ENCODE measurements at regions of chr5 and their contacts with region 1.

Region 1: GRCh38 chr5:145936401-145937131 is at the start of gene SH3RF2:
- DNase-seq: peak; percentile 68 to 85
- ATAC-seq: peak; percentile 67
- H3K4me3 ChIP-seq: peak within 1 kb of the TSS; percentile 19 to 32
- H3K27ac ChIP-seq: peak within 1 kb of the TSS in 1 of 2 donors; percentile 58
- H3K4me1 ChIP-seq: peaks cover 0 to 1% of the 10 kb centered on the region in 2 donors
- H3K27me3 ChIP-seq: no peaks in the 10 kb centered on the region
- total RNA-seq, gene SH3RF2: 3.1 to 4.5 TPM

Region 2: DNA sequence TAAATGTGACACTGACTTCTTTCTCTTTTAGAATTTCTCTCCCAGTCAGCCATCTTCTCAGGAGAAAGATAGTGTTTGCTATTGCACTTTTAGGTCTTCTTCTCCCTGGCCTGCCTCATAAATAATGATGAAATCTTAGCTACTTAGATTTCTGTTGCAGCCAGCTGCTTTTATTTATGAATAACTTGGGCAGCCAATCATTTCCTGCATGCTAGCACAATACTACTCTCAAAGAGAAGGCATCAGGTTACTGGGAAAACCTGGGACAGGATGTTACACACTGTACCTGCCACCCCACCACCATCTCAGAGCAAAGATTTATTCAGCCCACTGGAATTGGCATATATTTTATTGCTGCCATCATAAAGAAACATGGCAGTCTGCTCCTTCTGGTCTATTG is 368.0 kb before region 1 on chr5:
- intact Hi-C with region 1: no loop called
- DNase-seq: no peak
- ATAC-seq: no peak
- H3K4me3 ChIP-seq: no peak overlapping the region
- H3K27ac ChIP-seq: no peak overlapping the region
- H3K4me1 ChIP-seq: no peaks in the 10 kb centered on the region
- H3K27me3 ChIP-seq: no peaks in the 10 kb centered on the region

Region 3: DNA sequence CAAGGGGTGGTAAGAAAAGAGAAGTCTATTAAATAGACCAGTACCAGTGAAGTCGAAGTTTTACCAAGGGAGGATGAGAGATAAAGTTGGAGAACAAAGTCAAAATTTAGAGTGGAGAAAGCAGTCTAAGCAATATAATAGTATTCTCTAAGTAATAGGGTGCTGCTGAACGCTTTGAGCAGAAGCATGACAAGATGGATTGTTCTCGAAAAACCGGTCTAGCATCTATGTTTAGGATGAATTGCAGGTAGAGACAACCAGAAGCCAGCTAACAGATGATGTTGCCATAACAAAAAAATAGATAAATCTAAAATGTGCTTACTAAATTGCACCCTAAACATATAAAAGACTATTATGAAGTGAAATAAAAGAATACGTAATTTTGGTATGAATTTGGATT is 338.4 kb before region 1 on chr5:
- intact Hi-C with region 1: no loop called
- DNase-seq: no peak
- ATAC-seq: no peak
- H3K4me3 ChIP-seq: no peak overlapping the region
- H3K27ac ChIP-seq: no peak overlapping the region
- H3K4me1 ChIP-seq: no peaks in the 10 kb centered on the region
- H3K27me3 ChIP-seq: no peaks in the 10 kb centered on the region

Region 4: GRCh38 chr5:145975361-145976066 is 38.9 kb after region 1 on chr5:
- intact Hi-C with region 1: loop called in 1 of 2 experiments (anchors 5 kb)
- DNase-seq: peak in 1 of 2 donors; percentile 58
- ATAC-seq: peak; percentile 58
- H3K4me3 ChIP-seq: no peak overlapping the region
- H3K27ac ChIP-seq: peak overlapping the region; percentile 32 to 98
- H3K4me1 ChIP-seq: peaks cover 7% of the 10 kb centered on the region in 2 donors
- H3K27me3 ChIP-seq: no peaks in the 10 kb centered on the region

Region 5: DNA sequence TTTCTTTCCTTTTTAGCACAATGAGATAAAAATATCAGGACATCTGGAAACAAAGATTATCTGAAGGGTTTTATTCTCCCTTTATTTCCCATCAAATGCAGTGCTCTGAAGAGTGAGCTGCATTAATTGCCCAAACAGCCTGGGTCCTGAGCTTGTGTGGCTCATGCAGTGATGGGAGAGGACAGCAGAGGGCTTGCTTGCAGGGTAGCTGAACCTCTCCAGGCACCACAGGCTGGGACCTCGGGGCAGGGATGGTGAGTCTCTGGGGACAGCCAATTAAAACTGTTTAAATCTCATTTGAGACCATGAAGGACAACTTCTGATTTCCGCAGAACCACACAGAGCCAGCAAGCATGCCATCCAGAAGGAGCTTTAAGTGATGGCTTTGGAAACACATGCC is 97.6 kb after region 1 on chr5:
- intact Hi-C with region 1: loop called in 1 of 2 experiments (anchors 10 kb)
- DNase-seq: no peak
- ATAC-seq: no peak
- H3K4me3 ChIP-seq: no peak overlapping the region
- H3K27ac ChIP-seq: no peak overlapping the region
- H3K4me1 ChIP-seq: no peaks in the 10 kb centered on the region
- H3K27me3 ChIP-seq: no peaks in the 10 kb centered on the region

Region 6: GRCh38 chr5:146203011-146203871 is 266.7 kb after region 1 on chr5 and contains the start of gene RBM27:
- intact Hi-C with region 1: no loop called
- DNase-seq: peak; percentile 97 to 98
- ATAC-seq: peak; percentile 100
- H3K4me3 ChIP-seq: peak within 1 kb of the TSS; percentile 81 to 97
- H3K27ac ChIP-seq: peak within 1 kb of the TSS in 1 of 2 donors; percentile 74
- H3K4me1 ChIP-seq: peaks cover 0 to 4% of the 10 kb centered on the region in 2 donors
- H3K27me3 ChIP-seq: no peaks in the 10 kb centered on the region
- total RNA-seq, gene RBM27: 23.2 to 24.9 TPM

Measured in aorta (tissue), 5 donors.